ENCODE measurements at regions of chr15 and their contacts with region 1.

Region 1: DNA sequence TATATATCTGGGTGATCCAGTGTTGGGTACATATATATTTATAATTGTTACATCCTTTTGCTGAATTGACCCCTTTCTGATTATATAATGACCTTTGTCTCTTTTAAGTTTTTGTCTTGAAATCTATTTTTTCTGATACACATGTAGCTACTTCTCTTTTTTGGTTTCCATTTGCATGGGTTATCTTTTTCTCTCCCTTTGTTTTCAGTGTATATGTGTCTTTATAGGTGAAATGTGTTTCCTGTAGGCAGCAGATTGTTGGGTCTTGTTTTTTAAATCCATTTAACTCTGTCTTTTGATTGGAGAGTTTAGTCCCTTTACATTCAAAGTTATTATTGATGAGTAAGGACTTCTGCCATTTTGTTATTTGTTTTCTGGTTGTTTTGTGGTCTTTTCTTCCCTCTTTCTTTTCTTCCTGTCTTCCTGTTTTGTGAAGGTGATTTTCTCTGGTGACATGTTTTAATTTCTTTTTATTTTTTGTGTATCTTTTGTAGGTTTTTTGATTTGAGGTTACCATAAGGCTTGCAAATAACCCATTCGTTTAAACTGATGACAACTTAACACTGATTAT is 56.8 kb downstream of the STARD9 start:
- DNase-seq: no peak
- H3K4me3 ChIP-seq: no peak overlapping the region
- H3K27ac ChIP-seq: no peak overlapping the region
- H3K4me1 ChIP-seq: peaks cover under 1% of the 10 kb centered on the region
- H3K27me3 ChIP-seq: no peaks in the 10 kb centered on the region
- CTCF ChIP-seq: no peak
- EP300 ChIP-seq: no peak
- POLR2A ChIP-seq: no peak

Region 2: GRCh38 chr15:41849861-41850260 is 782.3 kb before region 1 on chr15:
- intact Hi-C with region 1: loop called in 1 of 4 experiments (anchors 10 kb)
- DNase-seq: no peak
- H3K4me3 ChIP-seq: no peak overlapping the region
- H3K27ac ChIP-seq: no peak overlapping the region
- H3K4me1 ChIP-seq: peaks cover 3% of the 10 kb centered on the region
- H3K27me3 ChIP-seq: no peaks in the 10 kb centered on the region
- CTCF ChIP-seq: no peak
- EP300 ChIP-seq: no peak
- POLR2A ChIP-seq: no peak

Region 3: DNA sequence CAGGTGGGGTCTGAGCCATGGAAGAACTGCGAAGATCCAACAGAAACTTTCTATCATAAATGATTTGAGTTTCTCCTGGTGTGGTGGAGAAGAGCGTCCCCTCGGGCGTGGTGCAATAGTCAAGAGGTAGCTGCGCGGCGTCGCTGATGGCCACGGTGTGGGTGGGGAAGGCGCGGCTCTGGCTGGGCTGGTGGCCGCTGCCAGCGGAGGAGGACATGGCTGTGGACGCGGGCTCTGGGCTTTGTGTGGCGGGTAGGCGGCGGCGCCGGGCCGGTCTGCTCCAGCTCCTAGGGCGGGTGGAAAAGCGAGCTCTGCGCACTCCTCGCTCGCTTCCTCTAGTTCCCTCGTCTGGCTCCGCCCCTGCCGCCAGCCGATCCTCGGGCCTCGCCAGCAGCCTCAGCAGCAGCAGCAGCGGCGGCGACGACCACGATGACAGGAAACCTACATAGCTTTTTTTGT is 50.9 kb before region 1 on chr15:
- intact Hi-C with region 1: loop called in 1 of 4 experiments (anchors 10 kb)
- DNase-seq: peak; percentile 81 to 86 (median 84)
- H3K4me3 ChIP-seq: peak overlapping the region; percentile 37
- H3K27ac ChIP-seq: peak overlapping the region; percentile 27 to 65
- H3K4me1 ChIP-seq: peaks cover 27% of the 10 kb centered on the region
- H3K27me3 ChIP-seq: no peaks in the 10 kb centered on the region
- CTCF ChIP-seq: no peak
- EP300 ChIP-seq: no peak
- POLR2A ChIP-seq: peak; percentile 25

Measured in ovary (tissue), 10 donors.